GM12878 (cell line): ENCODE measurements at regions of chr12 and their contacts with region 1.

Region 1: DNA sequence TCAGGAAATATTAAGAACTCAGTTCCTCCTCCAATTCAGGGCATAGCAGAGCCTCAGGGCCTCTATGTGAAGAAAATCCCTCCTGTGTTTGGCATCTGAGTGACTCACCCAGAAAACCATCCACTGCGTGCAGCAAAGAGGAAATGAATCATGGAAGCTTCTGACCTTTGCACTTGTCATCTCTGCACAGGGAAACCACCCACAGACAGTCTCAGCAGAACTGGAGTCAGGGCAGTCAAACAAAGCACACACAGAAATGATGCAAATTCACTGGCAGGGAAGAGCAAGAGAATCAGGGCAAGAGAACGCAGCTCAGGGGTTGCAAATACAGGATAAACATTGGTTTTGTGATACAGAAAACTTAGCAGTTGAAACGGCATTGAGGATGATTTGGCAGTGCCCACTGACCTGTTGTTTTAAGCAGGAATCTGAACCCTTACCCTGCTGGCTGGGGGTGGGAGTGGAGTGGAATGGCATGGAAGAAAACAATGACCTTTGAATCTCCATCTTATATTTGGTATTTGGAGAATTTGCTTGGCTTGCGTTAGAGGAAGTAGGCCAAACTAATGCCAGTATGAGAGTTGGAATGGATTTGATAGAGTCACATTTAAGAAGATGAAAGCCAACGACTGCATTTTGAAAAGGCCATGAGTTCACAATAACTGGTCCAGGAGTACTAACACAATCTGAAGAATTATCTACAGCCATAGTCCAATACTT is 53.5 kb downstream of the PHLDA1 start:
- DNase-seq: peak; percentile 94
- ATAC-seq: peak; percentile 86
- H3K4me3 ChIP-seq: no peak overlapping the region
- H3K27ac ChIP-seq: peak overlapping the region; percentile 71
- H3K4me1 ChIP-seq: peaks cover 32% of the 10 kb centered on the region
- H3K27me3 ChIP-seq: no peaks in the 10 kb centered on the region
- CTCF ChIP-seq: no peak
- EP300 ChIP-seq: peak; percentile 97 to 98
- POLR2A ChIP-seq: no peak
- RAD21 ChIP-seq: peak; percentile 25; the same call in 1 of the 2 replicates

Region 2: DNA sequence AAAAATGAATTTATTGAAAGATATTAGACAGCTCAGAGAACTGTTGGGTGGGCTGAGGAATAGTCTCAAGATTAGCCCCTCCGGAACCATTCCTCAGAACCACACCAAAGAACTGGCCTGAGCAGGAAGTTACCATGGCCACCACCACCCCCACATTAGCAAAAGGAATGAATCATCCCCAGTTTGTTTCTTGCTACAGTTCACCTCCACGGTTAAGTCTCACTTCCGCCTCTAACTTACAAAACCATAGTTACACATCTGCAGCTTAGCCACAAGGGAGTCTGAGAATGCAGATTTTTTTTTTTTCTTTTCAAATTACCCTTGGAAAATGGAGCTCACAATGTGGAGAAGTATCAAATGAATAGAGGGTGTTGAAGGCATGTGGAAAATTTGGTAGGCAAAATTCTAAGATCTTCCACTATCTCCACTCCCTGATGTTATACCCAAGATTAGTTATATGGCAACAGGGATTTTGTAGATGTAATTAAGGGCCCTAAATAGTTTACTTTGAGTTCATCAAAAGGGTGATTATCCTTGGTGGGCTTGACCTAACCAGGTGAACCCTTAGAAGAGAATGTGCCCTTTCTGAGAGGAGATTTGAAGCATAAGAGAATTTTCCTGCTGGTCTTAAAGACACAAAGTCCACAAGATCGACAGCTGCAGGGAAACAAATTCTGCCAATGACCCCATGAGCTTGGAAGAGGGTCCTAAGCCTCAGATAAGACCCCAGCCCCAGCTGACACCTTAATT is 336.9 kb before region 1 on chr12:
- CTCF ChIA-PET with region 1: interaction called, 4 read pairs
- POLR2A ChIA-PET with region 1: no interaction called
- RAD21 ChIA-PET with region 1: interaction called, 11 read pairs
- SMC1A ChIA-PET with region 1: interaction called, 19 read pairs
- in situ Hi-C with region 1: no loop called
- intact Hi-C with region 1: no loop called
- DNase-seq: peak; percentile 87
- ATAC-seq: peak; percentile 96
- H3K4me3 ChIP-seq: no peak overlapping the region
- H3K27ac ChIP-seq: peak overlapping the region; percentile 76
- H3K4me1 ChIP-seq: peaks cover 22% of the 10 kb centered on the region
- H3K27me3 ChIP-seq: no peaks in the 10 kb centered on the region
- CTCF ChIP-seq: no peak
- EP300 ChIP-seq: peak; percentile 91 to 92
- POLR2A ChIP-seq: no peak
- RAD21 ChIP-seq: peak; percentile 40; the same call in 1 of the 2 replicates

Region 3: DNA sequence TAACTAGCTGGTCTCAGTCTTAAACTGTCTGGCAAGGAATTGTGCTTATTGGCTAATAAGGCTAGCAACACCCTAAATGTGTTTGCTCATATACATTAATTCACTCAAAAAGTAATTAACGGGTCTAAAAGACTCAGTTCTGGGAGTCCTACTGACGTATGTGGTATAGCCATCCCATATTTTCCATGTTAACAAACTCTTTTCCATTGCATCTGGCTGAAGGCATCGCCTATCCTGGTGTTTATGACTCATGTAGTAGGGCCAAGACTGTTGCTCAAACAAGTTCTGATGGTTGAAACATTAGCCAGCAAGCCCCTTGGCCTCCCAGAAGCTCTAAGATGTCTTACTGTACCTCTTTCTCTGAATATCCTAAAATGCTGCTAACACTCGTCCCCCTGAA is 45.0 kb before region 1 on chr12:
- CTCF ChIA-PET with region 1: interaction called, 13 read pairs
- POLR2A ChIA-PET with region 1: interaction called, 31 read pairs
- RAD21 ChIA-PET with region 1: interaction called, 82 read pairs
- SMC1A ChIA-PET with region 1: interaction called, 104 read pairs
- in situ Hi-C with region 1: no loop called
- intact Hi-C with region 1: loop called (anchors 2 kb)
- DNase-seq: no peak
- ATAC-seq: no peak
- H3K4me3 ChIP-seq: no peak overlapping the region
- H3K27ac ChIP-seq: no peak overlapping the region
- H3K4me1 ChIP-seq: peaks cover 12% of the 10 kb centered on the region
- H3K27me3 ChIP-seq: no peaks in the 10 kb centered on the region
- CTCF ChIP-seq: no peak
- EP300 ChIP-seq: no peak
- POLR2A ChIP-seq: no peak
- RAD21 ChIP-seq: no peak

Region 4: GRCh38 chr12:75944097-75944904 is 33.8 kb before region 1 on chr12:
- CTCF ChIA-PET with region 1: interaction called, 4 read pairs
- POLR2A ChIA-PET with region 1: interaction called, 5 read pairs
- RAD21 ChIA-PET with region 1: interaction called, 6 read pairs
- SMC1A ChIA-PET with region 1: interaction called, 10 read pairs
- in situ Hi-C with region 1: no loop called
- intact Hi-C with region 1: loop called (anchors 2 kb)
- DNase-seq: peak; percentile 54
- ATAC-seq: peak; percentile 92
- H3K4me3 ChIP-seq: no peak overlapping the region
- H3K27ac ChIP-seq: peak overlapping the region; percentile 37
- H3K4me1 ChIP-seq: peaks cover 18% of the 10 kb centered on the region
- H3K27me3 ChIP-seq: no peaks in the 10 kb centered on the region
- CTCF ChIP-seq: no peak
- EP300 ChIP-seq: 0 out of 4 replicates have a peak, but pooled peaks of 1 of the 2 experiments have one; percentile 24
- POLR2A ChIP-seq: no peak
- RAD21 ChIP-seq: no peak

Region 5: DNA sequence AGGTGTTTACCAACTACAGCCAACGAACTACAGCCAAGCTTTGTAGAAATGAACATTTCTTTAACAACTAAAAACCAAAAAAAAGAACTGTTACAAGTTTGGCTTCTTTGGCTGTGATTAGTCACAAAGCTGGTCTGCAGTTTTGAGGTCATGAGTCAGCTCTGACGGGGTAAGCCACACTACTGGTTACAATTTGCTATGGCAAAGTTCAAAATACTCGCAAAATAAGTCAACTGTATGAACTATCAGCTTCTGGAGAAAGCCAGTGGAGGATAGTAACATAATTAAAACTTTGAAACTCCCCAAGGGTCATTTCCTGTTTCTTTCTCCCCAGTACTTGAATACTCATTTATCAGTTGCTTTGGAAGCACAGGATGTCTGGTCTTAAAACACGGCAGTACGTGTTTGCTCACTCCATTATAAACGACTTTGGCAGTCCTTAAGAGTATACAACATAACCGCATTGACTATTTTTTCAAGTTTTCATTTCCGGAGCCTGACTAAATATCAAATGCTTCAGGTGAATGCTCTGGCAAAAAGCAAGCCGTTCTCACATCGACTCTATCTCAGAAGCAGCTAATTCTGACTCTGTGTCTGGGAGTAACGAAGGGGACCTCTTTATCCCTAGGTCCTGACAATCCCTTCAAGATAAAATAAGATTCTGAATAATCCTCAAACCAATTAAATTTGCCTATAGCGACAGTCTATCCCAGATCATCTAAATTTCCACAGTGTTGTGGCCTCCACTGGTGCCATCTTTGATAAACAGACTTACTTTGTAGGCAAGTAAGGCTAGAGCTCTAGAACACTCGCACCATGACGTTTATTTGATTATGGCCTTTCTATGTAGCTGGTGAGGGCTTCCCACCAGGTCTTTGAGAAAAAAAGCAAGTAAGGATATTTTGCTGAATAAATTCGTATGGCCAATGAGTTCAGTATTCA is 42.9 kb after region 1 on chr12:
- CTCF ChIA-PET with region 1: interaction called, 7 read pairs
- POLR2A ChIA-PET with region 1: interaction called, 3 read pairs
- RAD21 ChIA-PET with region 1: interaction called, 24 read pairs
- SMC1A ChIA-PET with region 1: interaction called, 327 read pairs
- in situ Hi-C with region 1: no loop called
- intact Hi-C with region 1: no loop called
- DNase-seq: peak; percentile 19
- ATAC-seq: peak; percentile 76
- H3K4me3 ChIP-seq: no peak overlapping the region
- H3K27ac ChIP-seq: peak overlapping the region; percentile 18; the same call in 1 of the 2 replicates
- H3K4me1 ChIP-seq: peaks cover 14% of the 10 kb centered on the region
- H3K27me3 ChIP-seq: no peaks in the 10 kb centered on the region
- CTCF ChIP-seq: no peak
- EP300 ChIP-seq: no peak
- POLR2A ChIP-seq: no peak
- RAD21 ChIP-seq: no peak

Region 6: GRCh38 chr12:76074701-76075336 is 96.7 kb after region 1 on chr12:
- CTCF ChIA-PET with region 1: no interaction called
- POLR2A ChIA-PET with region 1: no interaction called
- RAD21 ChIA-PET with region 1: no interaction called
- SMC1A ChIA-PET with region 1: no interaction called
- in situ Hi-C with region 1: no loop called
- intact Hi-C with region 1: no loop called
- DNase-seq: no peak
- ATAC-seq: peak; percentile 44
- H3K4me3 ChIP-seq: peak overlapping the region; percentile 13; the same call in 1 of the 2 replicates
- H3K27ac ChIP-seq: no peak overlapping the region
- H3K4me1 ChIP-seq: peaks cover 4% of the 10 kb centered on the region; the same call in 1 of the 2 replicates
- H3K27me3 ChIP-seq: no peaks in the 10 kb centered on the region
- CTCF ChIP-seq: no peak
- EP300 ChIP-seq: no peak
- POLR2A ChIP-seq: no peak
- RAD21 ChIP-seq: no peak